SK-N-SH (cell line): ENCODE measurements at regions of chr4 and their contacts with region 1.

Region 1: DNA sequence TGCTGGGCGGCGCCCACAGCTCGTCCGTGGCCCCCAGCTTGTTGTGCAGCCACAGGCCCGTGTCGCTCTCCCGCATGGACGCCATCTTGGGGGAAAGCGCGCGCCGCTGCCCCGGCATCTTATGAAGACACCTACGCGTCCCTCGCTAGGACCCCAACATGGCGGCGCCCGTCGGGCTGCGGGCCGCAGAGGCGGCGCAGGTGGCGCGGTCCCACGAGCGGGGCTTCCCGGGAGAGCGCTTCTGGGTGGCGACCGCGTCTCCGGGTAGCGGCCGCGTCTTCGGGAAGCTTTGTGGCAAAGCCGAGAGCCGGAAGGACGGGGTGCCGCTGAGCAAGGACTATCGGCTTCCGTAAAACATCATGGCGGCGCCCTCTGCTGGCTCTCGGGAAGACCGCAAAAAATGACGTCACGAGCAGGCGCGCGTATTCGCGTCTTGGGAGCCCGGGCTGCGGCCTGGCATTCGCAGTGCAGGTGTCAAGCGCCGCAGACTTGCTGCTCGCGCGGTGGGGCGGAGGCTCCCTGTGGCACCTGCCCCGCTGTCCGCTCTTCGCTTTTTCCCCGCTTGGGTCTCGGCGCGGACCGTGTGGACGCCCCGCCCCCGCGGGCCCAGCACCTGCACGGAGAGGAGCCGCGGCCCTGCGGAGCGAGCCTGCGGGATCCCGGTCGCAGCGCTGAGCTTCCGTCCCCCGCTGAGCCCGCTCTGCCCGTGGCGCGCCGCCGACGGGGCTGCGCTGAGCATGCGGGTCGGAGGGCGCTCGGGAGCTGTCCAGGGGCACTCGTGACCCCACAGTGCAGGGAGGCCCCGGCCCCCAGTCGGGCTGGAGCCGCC is at the start of gene NELFA:
- DNase-seq: peak; percentile 96
- H3K4me3 ChIP-seq: peak within 1 kb of the TSS; percentile 75 to 89
- H3K27ac ChIP-seq: peak within 1 kb of the TSS; percentile 90 to 94
- H3K4me1 ChIP-seq: peaks cover 5 to 7% of the 10 kb centered on the region in 2 experiments; a peak in 1 of 4 replicates
- H3K27me3 ChIP-seq: no peaks in the 10 kb centered on the region
- CTCF ChIP-seq: no peak
- EP300 ChIP-seq: no peak
- RAD21 ChIP-seq: no peak; the same call in 1 of the 2 replicates
- polyA plus RNA-seq, gene NELFA: 17.3 and 26.8 TPM in 2 replicates

Region 2: GRCh38 chr4:1994935-1995334 is 14.2 kb before region 1 on chr4:
- CTCF ChIA-PET with region 1: interaction called, 12 read pairs
- POLR2A ChIA-PET with region 1: no interaction called
- DNase-seq: no peak
- H3K4me3 ChIP-seq: no peak overlapping the region
- H3K27ac ChIP-seq: no peak overlapping the region
- H3K4me1 ChIP-seq: peaks cover 0 to 9% of the 10 kb centered on the region in 2 experiments; a peak in 1 of 4 replicates
- H3K27me3 ChIP-seq: no peaks in the 10 kb centered on the region
- CTCF ChIP-seq: no peak
- EP300 ChIP-seq: no peak
- RAD21 ChIP-seq: no peak

Region 3: DNA sequence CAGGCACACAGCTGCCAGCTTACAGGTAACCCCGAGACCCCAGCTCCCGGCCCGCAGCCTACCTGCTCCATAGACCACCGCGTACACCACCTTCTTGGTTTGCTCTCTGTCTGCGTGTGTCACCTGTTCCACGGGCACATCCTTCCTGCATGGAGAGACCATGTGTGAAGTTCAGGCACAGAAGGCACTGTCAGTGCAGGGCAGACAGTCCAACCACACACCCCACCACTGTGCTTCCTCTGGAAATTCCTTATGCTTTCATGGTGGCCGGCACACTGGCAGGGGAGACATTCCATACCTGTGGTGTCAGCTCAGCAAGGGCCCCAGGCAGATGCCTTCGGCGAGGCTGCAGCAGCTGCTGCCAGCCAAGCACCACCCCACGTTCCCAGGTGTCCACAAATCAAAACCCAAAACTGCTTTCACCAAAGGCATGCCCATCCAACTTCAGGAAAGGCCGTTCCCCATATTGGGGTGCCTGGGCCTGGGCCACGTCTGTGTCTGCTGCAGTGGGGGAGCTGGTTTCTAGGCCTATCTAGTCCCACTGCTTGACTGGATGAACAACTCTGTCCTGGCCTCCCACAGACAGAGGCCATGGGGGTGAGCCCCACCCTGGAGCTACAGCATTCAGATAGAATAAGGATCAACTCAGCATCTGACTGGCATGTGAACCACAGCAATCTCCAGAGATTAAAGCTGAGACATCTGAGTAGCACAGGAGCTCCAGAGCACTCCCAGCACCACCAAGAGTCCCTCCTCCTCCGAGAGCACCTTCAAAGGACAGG is 86.9 kb after region 1 on chr4:
- CTCF ChIA-PET with region 1: no interaction called
- POLR2A ChIA-PET with region 1: no interaction called
- DNase-seq: no peak
- H3K4me3 ChIP-seq: no peak overlapping the region
- H3K27ac ChIP-seq: no peak overlapping the region
- H3K4me1 ChIP-seq: no peaks in the 10 kb centered on the region
- H3K27me3 ChIP-seq: no peaks in the 10 kb centered on the region
- CTCF ChIP-seq: no peak
- EP300 ChIP-seq: no peak
- RAD21 ChIP-seq: no peak